ENCODE measurements at regions of chr12 and their contacts with region 1.

Region 1: GRCh38 chr12:49130151-49131050 is 794 bp downstream of the TUBA1B start:
- DNase-seq: peak; percentile 89 to 97 (median 92)
- ATAC-seq: peak; percentile 67 to 75
- H3K4me3 Mint-ChIP-seq: peak overlapping the region; percentile 95 to 99 (median 97)
- H3K27ac Mint-ChIP-seq: peak overlapping the region; percentile 96 to 99 (median 98)
- H3K4me1 Mint-ChIP-seq: peaks cover 14 to 62% (median 49%) of the 10 kb centered on the region in 4 donors
- H3K27me3 Mint-ChIP-seq: no peaks in the 10 kb centered on the region

Region 2: GRCh38 chr12:49060237-49061156 is 69.9 kb before region 1 on chr12 and contains the start of gene KMT2D:
- POLR2A ChIA-PET with region 1: interaction called, 22 read pairs
- DNase-seq: peak; percentile 78 to 96 (median 86)
- ATAC-seq: peak; percentile 73 to 76
- H3K4me3 Mint-ChIP-seq: peak within 1 kb of the TSS; percentile 72 to 99 (median 94)
- H3K27ac Mint-ChIP-seq: peak within 1 kb of the TSS; percentile 92 to 99 (median 98)
- H3K4me1 Mint-ChIP-seq: peaks cover 42 to 58% (median 54%) of the 10 kb centered on the region in 4 donors
- H3K27me3 Mint-ChIP-seq: no peaks in the 10 kb centered on the region
- polyA plus RNA-seq, gene KMT2D: 1.5 to 28.5 (median 10.5) TPM

Region 3: DNA sequence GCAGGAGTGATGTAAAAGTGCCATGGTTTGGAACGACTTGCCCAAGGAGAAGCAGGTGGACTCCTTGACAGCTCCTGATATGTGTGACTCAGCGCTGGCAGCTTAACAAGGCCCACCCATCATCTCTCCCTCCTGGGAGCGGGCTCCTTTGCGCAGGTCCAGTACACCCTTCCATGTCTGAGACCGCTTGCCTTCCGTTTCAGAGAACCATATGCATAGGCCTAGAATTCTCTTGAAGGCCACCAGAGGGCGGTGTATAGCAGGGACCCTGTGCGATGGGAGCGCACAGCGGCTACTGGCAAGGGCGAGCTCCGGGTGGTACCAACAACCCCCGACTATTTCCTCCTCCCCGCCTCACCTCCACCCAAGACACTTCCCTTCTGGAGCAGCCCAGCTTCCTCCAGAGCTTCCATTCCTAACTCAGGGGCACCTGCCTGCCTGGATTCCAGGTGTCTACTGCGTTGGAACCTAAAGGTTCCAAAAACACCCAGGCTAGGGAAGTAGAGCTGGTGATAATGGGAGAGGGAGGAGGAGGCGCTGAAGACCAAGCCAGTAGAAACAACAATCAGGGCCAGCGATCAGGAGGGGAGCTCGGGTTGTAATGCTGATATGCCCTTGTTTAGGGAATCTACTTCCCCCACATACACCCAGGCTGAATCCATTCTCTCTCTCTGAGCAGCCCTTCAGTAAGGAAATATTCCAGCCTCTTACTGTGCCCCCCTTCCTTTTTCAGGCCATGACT is 42.0 kb before region 1 on chr12:
- POLR2A ChIA-PET with region 1: interaction called, 27 read pairs
- DNase-seq: peak; percentile 52 to 83 (median 68)
- ATAC-seq: peak; percentile 86 to 87
- H3K4me3 Mint-ChIP-seq: peak overlapping the region in 8 of 10 donors; percentile 8 to 71 (median 50)
- H3K27ac Mint-ChIP-seq: peak overlapping the region in 3 of 10 donors; percentile 39 to 47 (median 41)
- H3K4me1 Mint-ChIP-seq: peaks cover 10 to 46% (median 42%) of the 10 kb centered on the region in 4 donors
- H3K27me3 Mint-ChIP-seq: peaks cover 16 to 52% (median 38%) of the 10 kb centered on the region in 5 donors

Region 4: DNA sequence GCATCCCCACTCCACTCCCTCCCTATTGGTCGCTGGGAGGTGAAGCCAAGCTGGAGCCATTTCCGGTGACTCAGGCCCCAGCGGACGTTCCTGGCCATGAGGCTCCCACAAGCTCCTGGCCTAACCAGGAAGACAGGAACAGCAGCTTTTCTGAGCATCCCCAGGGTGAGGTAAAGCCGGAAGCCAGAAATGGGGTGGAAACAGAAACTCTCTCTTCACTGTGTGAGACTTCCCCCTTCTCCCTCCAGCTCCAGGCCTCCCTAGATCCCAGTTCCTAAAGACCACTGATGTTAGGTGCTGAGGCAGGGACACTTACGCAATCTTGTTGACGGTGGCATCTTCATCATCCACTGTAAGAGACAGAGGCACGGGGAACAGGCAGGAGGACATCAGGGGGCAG is 24.8 kb before region 1 on chr12:
- POLR2A ChIA-PET with region 1: interaction called, 152 read pairs
- DNase-seq: no peak
- ATAC-seq: no peak
- H3K4me3 Mint-ChIP-seq: no peak overlapping the region
- H3K27ac Mint-ChIP-seq: peak overlapping the region in 1 of 10 donors; percentile 32
- H3K4me1 Mint-ChIP-seq: peaks cover 26 to 50% (median 45%) of the 10 kb centered on the region in 4 donors
- H3K27me3 Mint-ChIP-seq: no peaks in the 10 kb centered on the region

Region 5: DNA sequence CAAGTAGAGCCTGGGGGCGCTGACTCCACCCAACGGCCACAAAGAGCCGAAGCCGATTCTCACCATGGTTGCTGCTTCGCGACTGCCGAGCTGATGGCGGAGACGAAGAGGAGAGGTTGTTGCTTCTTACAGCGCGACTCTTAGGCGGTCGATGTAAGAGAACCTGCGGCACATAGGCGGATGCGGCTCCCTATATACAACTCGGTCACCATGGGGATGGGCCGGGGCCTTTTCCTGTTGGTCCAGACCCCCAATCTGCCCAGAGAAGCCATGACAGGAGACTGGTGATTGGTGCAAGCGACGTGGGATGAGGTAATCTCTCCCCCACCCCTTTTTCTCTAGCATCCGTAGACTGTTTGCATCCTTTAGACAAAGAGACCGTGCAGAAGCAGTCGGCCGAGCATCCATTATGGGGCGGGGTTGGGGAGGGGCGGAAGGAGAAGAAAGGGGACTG is 58.5 kb after region 1 on chr12 and contains the start of gene TUBA1A:
- POLR2A ChIA-PET with region 1: interaction called, 220 read pairs
- DNase-seq: peak; percentile 80 to 99 (median 96)
- ATAC-seq: peak; percentile 79 to 84
- H3K4me3 Mint-ChIP-seq: peak within 1 kb of the TSS; percentile 91 to 99 (median 96)
- H3K27ac Mint-ChIP-seq: peak within 1 kb of the TSS; percentile 97 to 100 (median 99)
- H3K4me1 Mint-ChIP-seq: peaks cover 14 to 31% (median 24%) of the 10 kb centered on the region in 4 donors
- H3K27me3 Mint-ChIP-seq: no peaks in the 10 kb centered on the region
- polyA plus RNA-seq, gene TUBA1A: 139 to 168 (median 147) TPM